ENCODE measurements at regions of chr5 and their contacts with region 1.

Region 1: GRCh38 chr5:126544087-126544740 is 50.8 kb downstream of the ALDH7A1 start:
- DNase-seq: peak in 15 of 42 donors; percentile 13 to 57 (median 38)

Region 2: GRCh38 chr5:126070481-126070880 is 473.7 kb before region 1 on chr5:
- intact Hi-C with region 1: no loop called
- DNase-seq: no peak

Region 3: GRCh38 chr5:126339215-126339805 is 204.9 kb before region 1 on chr5:
- intact Hi-C with region 1: loop called (anchors 5 kb)
- DNase-seq: peak in 27 of 42 donors; percentile 15 to 85 (median 59)

Region 4: GRCh38 chr5:126896170-126896717 is 352.0 kb after region 1 on chr5:
- intact Hi-C with region 1: no loop called
- DNase-seq: no peak

Region 5: DNA sequence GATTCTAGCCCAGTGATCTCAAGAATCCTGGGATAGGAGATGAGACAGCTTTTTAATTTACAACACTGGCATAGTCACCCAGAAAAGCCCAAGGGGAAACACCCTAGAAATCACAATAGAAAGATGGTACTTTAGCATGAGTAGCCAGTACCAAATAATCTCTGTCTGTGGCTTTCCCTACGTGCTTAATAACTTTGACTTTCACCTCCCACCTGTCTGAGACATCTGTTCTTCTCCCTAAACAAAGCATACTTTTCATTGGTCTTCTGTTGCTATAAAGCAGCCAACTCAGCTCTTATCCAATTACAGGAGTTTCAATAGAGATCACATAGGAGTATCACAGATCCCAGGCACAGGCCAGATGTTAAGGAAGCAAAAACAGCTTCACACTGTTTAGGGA is 475.7 kb after region 1 on chr5:
- intact Hi-C with region 1: no loop called
- DNase-seq: no peak

Measured in head of caudate nucleus (tissue), 42 donors.